PC-3 (cell line): ENCODE measurements at regions of chr5 and their contacts with region 1.

Region 1: DNA sequence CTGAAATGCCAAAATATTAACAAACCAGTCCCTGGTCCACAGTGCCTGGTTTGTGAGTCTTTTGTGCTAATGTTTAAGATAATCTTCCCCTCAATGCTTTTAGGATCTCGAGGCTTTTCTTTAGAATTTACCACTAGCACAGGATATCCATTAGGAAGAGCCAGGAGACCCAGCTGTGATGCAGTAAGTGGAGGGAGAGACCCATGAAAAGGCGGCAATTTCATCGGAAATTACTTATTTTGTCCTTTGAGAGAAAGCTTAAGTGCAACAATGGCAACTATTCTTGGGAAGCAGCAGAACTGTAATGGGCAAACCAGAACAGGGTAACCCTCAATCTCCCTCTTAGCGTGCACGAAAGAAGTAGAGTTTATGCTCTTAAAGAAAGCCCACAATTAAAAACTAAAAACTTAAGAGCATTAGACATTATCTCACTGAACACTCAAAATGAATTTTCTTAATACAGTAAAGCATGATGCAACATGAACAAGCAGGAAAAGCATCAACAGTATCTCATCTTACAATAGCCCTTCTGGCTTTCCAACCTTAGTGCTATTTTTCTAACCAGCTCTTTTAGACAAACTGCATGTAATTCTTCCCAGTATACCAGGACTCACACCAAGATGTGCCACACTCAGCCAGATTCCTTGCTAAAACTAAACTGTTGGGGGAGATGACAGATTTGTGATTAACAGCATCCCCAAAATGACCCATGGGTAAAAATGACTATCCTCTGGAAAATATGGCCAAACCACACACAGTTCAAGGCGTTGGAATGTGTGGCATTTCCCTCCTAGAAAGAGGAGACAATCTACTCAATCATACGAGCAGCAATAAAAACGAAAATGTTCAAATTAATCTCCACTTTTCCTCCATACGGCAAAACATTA is 36.4 kb downstream of the PWWP2A start:
- DNase-seq: peak; percentile 77
- ATAC-seq: peak; percentile 75
- H3K4me3 ChIP-seq: 0 out of 2 replicates have a peak overlapping the region, but pooled peaks have one; percentile 18
- H3K27ac ChIP-seq: peak overlapping the region; percentile 6; the same call in 1 of the 2 replicates
- H3K4me1 ChIP-seq: peaks cover 25% of the 10 kb centered on the region
- H3K27me3 ChIP-seq: no peaks in the 10 kb centered on the region
- CTCF ChIP-seq: no peak

Region 2: DNA sequence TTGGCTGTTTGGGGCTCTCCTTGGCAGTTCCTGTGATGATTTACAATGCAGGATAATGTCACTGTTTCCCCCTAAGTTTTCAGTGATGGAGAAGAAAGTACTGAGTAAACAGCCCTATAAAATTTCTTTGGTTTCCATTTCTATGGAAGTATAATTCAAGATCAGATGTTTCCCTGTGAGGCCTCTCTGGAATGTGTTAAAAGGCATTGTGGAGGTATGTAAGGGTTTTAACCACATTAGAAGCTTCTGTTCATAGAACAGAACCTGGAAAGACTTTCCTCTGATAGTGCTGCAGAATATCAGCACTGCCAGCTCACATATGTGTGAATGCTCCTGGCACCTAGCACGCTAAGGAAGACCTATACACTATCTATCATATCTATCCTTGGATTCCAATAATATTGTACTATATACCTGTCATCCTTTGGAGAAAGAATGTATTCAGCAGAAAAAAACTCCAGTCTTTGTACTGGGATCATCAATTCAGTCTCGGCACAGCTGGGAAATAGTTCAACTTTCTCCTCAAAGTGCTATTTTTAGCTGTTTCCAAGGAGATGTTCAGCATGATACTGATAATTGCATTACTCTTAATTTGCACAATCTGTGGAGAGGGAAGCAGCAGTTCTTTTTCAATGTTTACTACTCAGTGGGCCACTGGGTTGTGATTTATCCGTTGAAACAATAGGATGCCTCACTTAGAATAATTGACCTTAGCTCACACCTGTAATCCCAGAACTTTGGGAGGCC is 52.1 kb before region 1 on chr5:
- CTCF ChIA-PET with region 1: no interaction called
- POLR2A ChIA-PET with region 1: no interaction called
- intact Hi-C with region 1: no loop called
- DNase-seq: no peak
- ATAC-seq: no peak
- H3K4me3 ChIP-seq: no peak overlapping the region
- H3K27ac ChIP-seq: no peak overlapping the region
- H3K4me1 ChIP-seq: no peaks in the 10 kb centered on the region
- H3K27me3 ChIP-seq: no peaks in the 10 kb centered on the region
- CTCF ChIP-seq: no peak

Region 3: DNA sequence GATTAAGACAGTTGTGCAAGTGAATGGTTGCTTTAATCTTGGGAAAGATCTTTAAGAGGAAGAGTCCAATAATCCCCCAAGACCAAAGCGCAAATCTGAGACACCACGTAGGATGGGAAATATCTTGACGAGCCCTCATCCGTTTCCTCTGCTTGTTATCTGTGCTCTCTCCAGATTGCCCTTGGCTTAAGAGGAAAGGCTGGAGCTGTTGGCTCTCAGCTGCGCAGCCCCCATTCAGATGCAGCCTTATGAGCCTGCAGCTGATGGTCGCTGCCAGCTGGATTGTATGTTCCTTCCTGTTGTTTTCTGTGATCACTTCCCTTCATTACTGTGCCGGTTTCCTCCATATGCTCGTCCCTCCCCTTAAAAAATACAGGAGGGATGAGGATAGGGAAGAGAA is 11.3 kb before region 1 on chr5:
- CTCF ChIA-PET with region 1: interaction called, 11 read pairs
- POLR2A ChIA-PET with region 1: no interaction called
- intact Hi-C with region 1: no loop called
- DNase-seq: no peak
- ATAC-seq: no peak
- H3K4me3 ChIP-seq: no peak overlapping the region
- H3K27ac ChIP-seq: no peak overlapping the region
- H3K4me1 ChIP-seq: no peaks in the 10 kb centered on the region
- H3K27me3 ChIP-seq: no peaks in the 10 kb centered on the region
- CTCF ChIP-seq: no peak

Region 4: GRCh38 chr5:160119142-160119904 is 36.5 kb after region 1 on chr5 and contains the start of gene PWWP2A:
- CTCF ChIA-PET with region 1: interaction called, 3 read pairs
- POLR2A ChIA-PET with region 1: no interaction called
- intact Hi-C with region 1: loop called (anchors 1 kb)
- DNase-seq: peak; percentile 100
- ATAC-seq: peak; percentile 93
- H3K4me3 ChIP-seq: peak within 1 kb of the TSS; percentile 99
- H3K27ac ChIP-seq: peak within 1 kb of the TSS; percentile 44
- H3K4me1 ChIP-seq: peaks cover 6% of the 10 kb centered on the region; the same call in 1 of the 2 replicates
- H3K27me3 ChIP-seq: no peaks in the 10 kb centered on the region
- CTCF ChIP-seq: no peak; the same call in 1 of the 2 replicates
- total RNA-seq, gene PWWP2A: 14.2 and 15.3 TPM in 2 replicates

Region 5: DNA sequence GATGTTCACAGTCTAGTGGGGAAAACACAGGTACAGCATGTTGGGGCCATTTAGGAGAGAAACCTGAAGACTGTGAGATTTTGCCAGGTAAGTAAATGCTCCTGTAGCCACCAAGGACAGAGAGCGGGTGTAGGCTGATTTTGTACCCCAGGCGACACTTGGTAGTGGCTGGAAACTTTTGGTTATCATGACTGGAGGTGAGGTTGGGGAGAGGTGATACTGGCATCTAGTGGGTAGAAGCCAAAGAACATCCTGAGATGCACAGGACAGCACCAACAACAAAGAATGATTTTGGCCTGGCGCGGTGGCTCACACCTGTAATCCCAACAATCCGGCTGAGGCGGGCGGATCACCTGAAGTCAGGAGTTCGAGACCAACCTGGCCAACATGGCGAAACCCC is 75.2 kb after region 1 on chr5:
- CTCF ChIA-PET with region 1: no interaction called
- POLR2A ChIA-PET with region 1: no interaction called
- intact Hi-C with region 1: loop called (anchors 1 kb)
- DNase-seq: peak; percentile 12
- ATAC-seq: peak; percentile 80
- H3K4me3 ChIP-seq: no peak overlapping the region
- H3K27ac ChIP-seq: no peak overlapping the region
- H3K4me1 ChIP-seq: peaks cover 7% of the 10 kb centered on the region
- H3K27me3 ChIP-seq: no peaks in the 10 kb centered on the region
- CTCF ChIP-seq: peak; percentile 27; the same call in 1 of the 2 replicates

Region 6: DNA sequence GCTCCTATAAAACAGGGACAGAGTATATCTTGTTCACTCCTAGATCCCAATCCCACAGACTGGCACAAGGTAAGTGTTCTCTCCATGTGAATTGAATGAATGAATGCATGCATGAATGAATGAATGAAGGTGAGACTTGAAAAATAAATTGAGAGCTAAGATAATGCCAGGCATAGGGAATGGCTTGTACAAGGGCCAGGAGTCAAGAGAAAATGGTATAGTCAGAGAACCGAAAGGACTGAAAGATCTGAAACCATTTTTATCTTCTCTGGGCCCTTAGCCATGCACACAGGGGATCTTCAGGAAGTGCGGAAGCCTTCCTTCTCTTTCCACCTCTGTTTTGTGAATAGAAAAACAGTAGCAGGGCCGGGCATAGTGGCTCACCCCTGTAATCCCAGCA is 98.1 kb after region 1 on chr5:
- CTCF ChIA-PET with region 1: interaction called, 13 read pairs
- POLR2A ChIA-PET with region 1: no interaction called
- intact Hi-C with region 1: no loop called
- DNase-seq: no peak
- ATAC-seq: no peak
- H3K4me3 ChIP-seq: no peak overlapping the region
- H3K27ac ChIP-seq: no peak overlapping the region
- H3K4me1 ChIP-seq: peaks cover 12% of the 10 kb centered on the region
- H3K27me3 ChIP-seq: no peaks in the 10 kb centered on the region
- CTCF ChIP-seq: no peak

Region 7: DNA sequence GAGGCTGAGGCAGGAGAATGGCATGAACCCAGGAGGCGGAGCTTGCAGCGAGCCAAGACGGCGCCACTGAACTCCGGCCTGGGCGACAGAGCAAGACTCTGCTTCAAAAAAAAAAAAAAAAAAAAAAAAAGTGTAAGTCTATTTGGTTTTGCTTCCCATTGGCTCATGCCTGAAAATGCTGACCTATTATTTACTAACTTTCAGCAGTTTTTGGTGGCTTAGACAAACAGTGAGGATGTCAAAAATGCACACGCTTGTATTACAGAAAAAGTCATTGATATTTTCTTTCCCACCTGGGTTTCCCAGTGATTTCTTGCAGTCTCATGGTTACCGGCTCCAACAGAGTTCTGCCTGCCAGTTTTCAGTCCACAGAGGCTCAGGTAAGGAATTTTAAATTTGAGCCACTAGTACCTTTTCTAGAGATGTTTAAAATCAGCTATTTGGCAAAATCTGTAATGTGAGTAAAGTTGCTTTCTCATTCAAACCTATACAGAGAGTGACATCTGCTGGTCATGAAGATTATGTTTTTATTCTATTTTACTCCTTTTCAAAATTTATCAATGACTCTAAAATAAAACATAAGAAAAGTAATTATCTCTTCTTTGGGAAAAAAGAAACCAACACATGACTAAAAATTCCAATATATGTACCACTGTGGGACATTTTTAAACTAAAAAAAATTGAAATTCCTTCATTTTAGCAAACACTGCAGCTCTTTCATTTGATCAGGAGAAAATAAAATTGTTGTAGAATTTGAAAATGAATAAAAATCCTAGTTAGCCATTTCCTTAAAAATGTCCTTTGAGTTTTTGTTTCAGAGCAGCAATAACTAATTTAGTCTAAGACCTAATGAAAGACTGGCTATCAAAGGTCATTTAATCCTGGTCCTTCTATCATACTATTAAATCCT is 308.2 kb after region 1 on chr5:
- CTCF ChIA-PET with region 1: interaction called, 7 read pairs
- POLR2A ChIA-PET with region 1: no interaction called
- intact Hi-C with region 1: loop called (anchors 1 kb)
- DNase-seq: peak; percentile 53
- ATAC-seq: peak; percentile 50; the same call in 1 of the 2 replicates
- H3K4me3 ChIP-seq: no peak overlapping the region
- H3K27ac ChIP-seq: no peak overlapping the region
- H3K4me1 ChIP-seq: no peaks in the 10 kb centered on the region
- H3K27me3 ChIP-seq: no peaks in the 10 kb centered on the region
- CTCF ChIP-seq: peak; percentile 78